OCI-LY7 (cell line): ENCODE measurements at regions of chr2 and their contacts with region 1.

Region 1: GRCh38 chr2:224922142-224922727 is 120.0 kb downstream of the DOCK10 start:
- DNase-seq: peak; percentile 85
- H3K4me3 ChIP-seq: peak overlapping the region; percentile 32
- H3K27ac ChIP-seq: peak overlapping the region; percentile 71
- H3K4me1 ChIP-seq: peaks cover 68% of the 10 kb centered on the region
- CTCF ChIP-seq: no peak

Region 2: GRCh38 chr2:224909885-224910573 is 12.2 kb before region 1 on chr2:
- CTCF ChIA-PET with region 1: no interaction called
- POLR2A ChIA-PET with region 1: interaction called, 12 read pairs
- intact Hi-C with region 1: no loop called
- DNase-seq: no peak
- H3K4me3 ChIP-seq: no peak overlapping the region
- H3K27ac ChIP-seq: no peak overlapping the region
- H3K4me1 ChIP-seq: no peaks in the 10 kb centered on the region
- CTCF ChIP-seq: no peak

Region 3: DNA sequence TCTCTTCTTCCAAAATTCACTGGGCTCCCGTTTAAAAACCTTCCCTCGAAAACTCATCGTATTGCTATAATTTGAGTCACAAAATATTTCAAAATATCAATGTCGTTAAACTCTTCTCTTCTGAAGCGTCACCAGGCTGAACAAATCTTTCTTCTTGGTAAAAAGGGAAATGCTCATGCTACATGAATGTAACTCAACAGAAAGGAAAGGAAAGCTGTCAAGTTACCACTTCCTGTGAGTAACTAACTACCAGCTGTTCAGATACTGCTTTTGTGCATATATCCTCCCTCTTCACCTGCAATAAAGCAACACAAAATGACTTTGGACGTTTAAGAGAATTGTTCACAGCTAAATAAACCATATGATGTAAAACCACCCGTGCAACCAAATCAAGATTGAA is 24.7 kb after region 1 on chr2:
- CTCF ChIA-PET with region 1: no interaction called
- POLR2A ChIA-PET with region 1: interaction called, 15 read pairs
- intact Hi-C with region 1: no loop called
- DNase-seq: peak; percentile 86
- H3K4me3 ChIP-seq: peak overlapping the region; percentile 83
- H3K27ac ChIP-seq: peak overlapping the region; percentile 92
- H3K4me1 ChIP-seq: peaks cover 80% of the 10 kb centered on the region
- CTCF ChIP-seq: no peak

Region 4: DNA sequence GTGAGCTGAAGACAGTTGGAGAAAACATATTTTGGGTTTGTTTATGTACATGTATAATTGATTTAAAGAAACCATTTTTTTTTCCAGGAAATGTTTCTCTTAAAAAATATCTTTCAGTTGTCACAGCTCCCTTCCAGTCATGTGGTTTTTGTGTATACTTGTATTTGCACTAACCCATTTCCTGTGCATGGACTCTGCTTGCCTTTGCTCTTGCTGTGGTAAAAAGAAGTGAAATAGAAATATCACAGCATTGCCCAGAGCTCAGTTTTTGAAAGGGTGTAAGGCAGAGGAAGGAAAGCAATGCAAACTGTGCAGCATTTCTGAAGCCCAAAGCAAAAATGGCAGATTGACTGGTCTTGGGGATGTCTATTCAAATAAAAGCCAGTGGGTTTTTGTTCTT is 130.5 kb after region 1 on chr2:
- CTCF ChIA-PET with region 1: no interaction called
- POLR2A ChIA-PET with region 1: interaction called, 10 read pairs
- intact Hi-C with region 1: no loop called
- DNase-seq: peak; percentile 15
- H3K4me3 ChIP-seq: no peak overlapping the region
- H3K27ac ChIP-seq: no peak overlapping the region
- H3K4me1 ChIP-seq: no peaks in the 10 kb centered on the region
- CTCF ChIP-seq: no peak